ENCODE measurements at regions of chrX and their contacts with region 1.

Region 1: DNA sequence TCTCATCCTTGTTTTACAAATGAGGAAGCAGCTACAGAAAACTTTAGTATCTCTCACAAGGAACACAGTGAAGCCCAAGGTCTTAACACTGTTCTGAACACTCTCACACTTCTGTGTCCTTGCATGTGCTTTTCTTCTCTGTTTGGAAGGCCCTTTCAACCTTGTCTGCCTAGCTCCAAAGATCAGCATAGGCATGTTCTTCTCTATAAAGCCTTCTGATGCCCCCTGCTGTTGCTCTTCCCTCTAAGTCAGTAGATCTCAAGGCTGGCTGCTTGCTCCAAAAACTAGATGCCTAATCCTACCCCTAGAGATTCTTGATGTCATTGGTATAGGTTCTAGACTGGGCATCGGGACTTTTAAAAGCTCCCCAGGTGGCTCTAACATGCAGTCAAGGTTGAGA is 5.9 kb downstream of the APOO start:
- DNase-seq: peak in 6 of 9 experiments; percentile 6 to 66 (median 34)
- ATAC-seq: peak; percentile 80
- H3K4me3 ChIP-seq: no peak overlapping the region
- H3K4me3 Mint-ChIP-seq: no peak overlapping the region
- H3K27ac ChIP-seq: no peak overlapping the region
- H3K27ac Mint-ChIP-seq: no peak overlapping the region
- H3K4me1 ChIP-seq: peaks cover 6% of the 10 kb centered on the region
- H3K4me1 Mint-ChIP-seq: peaks cover 5% of the 10 kb centered on the region
- H3K27me3 ChIP-seq: no peaks in the 10 kb centered on the region
- H3K27me3 Mint-ChIP-seq: no peaks in the 10 kb centered on the region
- CTCF ChIP-seq: no peak

Region 2: GRCh38 chrX:23699636-23700194 is 202.1 kb before region 1 on chrX:
- CTCF ChIA-PET with region 1: interaction called, 66 read pairs
- POLR2A ChIA-PET with region 1: no interaction called
- intact Hi-C with region 1: loop called (anchors 1 kb)
- DNase-seq: peak in 6 of 9 experiments; percentile 11 to 62 (median 24)
- ATAC-seq: peak; percentile 65
- H3K4me3 ChIP-seq: no peak overlapping the region
- H3K4me3 Mint-ChIP-seq: peak overlapping the region; percentile 78
- H3K27ac ChIP-seq: no peak overlapping the region
- H3K27ac Mint-ChIP-seq: peak overlapping the region; percentile 50
- H3K4me1 ChIP-seq: no peaks in the 10 kb centered on the region
- H3K4me1 Mint-ChIP-seq: peaks cover 8% of the 10 kb centered on the region
- H3K27me3 ChIP-seq: no peaks in the 10 kb centered on the region
- H3K27me3 Mint-ChIP-seq: no peaks in the 10 kb centered on the region
- CTCF ChIP-seq: no peak

Region 3: GRCh38 chrX:23756157-23756559 is 145.6 kb before region 1 on chrX:
- CTCF ChIA-PET with region 1: interaction called, 14 read pairs
- POLR2A ChIA-PET with region 1: no interaction called
- intact Hi-C with region 1: loop called (anchors 1 kb)
- DNase-seq: peak; percentile 27 to 79 (median 62)
- ATAC-seq: no peak
- H3K4me3 ChIP-seq: no peak overlapping the region
- H3K4me3 Mint-ChIP-seq: no peak overlapping the region
- H3K27ac ChIP-seq: no peak overlapping the region
- H3K27ac Mint-ChIP-seq: no peak overlapping the region
- H3K4me1 ChIP-seq: no peaks in the 10 kb centered on the region
- H3K4me1 Mint-ChIP-seq: peaks cover 3% of the 10 kb centered on the region
- H3K27me3 ChIP-seq: no peaks in the 10 kb centered on the region
- H3K27me3 Mint-ChIP-seq: no peaks in the 10 kb centered on the region
- CTCF ChIP-seq: peak; percentile 37

Region 4: GRCh38 chrX:23792861-23793553 is 108.8 kb before region 1 on chrX:
- CTCF ChIA-PET with region 1: no interaction called
- POLR2A ChIA-PET with region 1: no interaction called
- intact Hi-C with region 1: no loop called
- DNase-seq: no peak
- ATAC-seq: no peak
- H3K4me3 ChIP-seq: no peak overlapping the region
- H3K4me3 Mint-ChIP-seq: no peak overlapping the region
- H3K27ac ChIP-seq: no peak overlapping the region
- H3K27ac Mint-ChIP-seq: no peak overlapping the region
- H3K4me1 ChIP-seq: no peaks in the 10 kb centered on the region
- H3K4me1 Mint-ChIP-seq: no peaks in the 10 kb centered on the region
- H3K27me3 ChIP-seq: no peaks in the 10 kb centered on the region
- H3K27me3 Mint-ChIP-seq: no peaks in the 10 kb centered on the region
- CTCF ChIP-seq: no peak